Activated T-helper 1 cell treated with anti-CD3 and anti-CD28 coated beads, Interleukin-12 subunit alpha, Interleukin-12 subunit beta, Interleukin-2, Interleukin-4 antibody, amounts not matched to agents 30 ng/mL and 10 ng/mL and 1 ng/mL, durations not matched to agents 14 hours and 24 hours and 36 hours (primary cell): ENCODE measurements at regions of chr6 and their contacts with region 1.

Region 1: GRCh38 chr6:121430514-121431460 is 4.7 kb upstream of the GJA1 start:
- DNase-seq: no peak
- H3K4me3 Mint-ChIP-seq: no peak overlapping the region
- H3K27ac Mint-ChIP-seq: no peak overlapping the region
- H3K4me1 Mint-ChIP-seq: no peaks in the 10 kb centered on the region
- H3K27me3 Mint-ChIP-seq: peaks cover 7% of the 10 kb centered on the region

Region 2: DNA sequence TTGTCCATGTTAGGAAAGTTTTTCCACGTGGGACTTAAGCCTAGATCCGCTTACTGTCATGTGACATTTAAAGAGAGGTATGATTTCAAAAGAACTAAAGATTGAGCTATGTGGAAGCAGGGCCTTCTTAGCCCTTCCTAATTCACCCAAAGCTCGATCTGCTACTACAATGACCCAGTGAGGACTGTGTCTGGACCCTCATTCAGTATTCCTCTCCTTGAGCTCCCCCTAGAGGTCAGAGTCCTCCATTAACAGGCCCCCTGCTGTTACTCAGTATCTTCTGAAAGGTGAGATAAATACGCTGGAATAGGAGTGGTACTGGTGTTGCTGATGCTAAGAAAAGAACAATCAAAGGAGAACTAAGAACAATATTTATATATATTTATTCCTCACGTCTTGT is 418.7 kb after region 1 on chr6:
- intact Hi-C with region 1: loop called (anchors 2 kb)
- DNase-seq: no peak
- H3K4me3 Mint-ChIP-seq: no peak overlapping the region
- H3K27ac Mint-ChIP-seq: no peak overlapping the region
- H3K4me1 Mint-ChIP-seq: no peaks in the 10 kb centered on the region
- H3K27me3 Mint-ChIP-seq: peaks cover 2% of the 10 kb centered on the region

Region 3: DNA sequence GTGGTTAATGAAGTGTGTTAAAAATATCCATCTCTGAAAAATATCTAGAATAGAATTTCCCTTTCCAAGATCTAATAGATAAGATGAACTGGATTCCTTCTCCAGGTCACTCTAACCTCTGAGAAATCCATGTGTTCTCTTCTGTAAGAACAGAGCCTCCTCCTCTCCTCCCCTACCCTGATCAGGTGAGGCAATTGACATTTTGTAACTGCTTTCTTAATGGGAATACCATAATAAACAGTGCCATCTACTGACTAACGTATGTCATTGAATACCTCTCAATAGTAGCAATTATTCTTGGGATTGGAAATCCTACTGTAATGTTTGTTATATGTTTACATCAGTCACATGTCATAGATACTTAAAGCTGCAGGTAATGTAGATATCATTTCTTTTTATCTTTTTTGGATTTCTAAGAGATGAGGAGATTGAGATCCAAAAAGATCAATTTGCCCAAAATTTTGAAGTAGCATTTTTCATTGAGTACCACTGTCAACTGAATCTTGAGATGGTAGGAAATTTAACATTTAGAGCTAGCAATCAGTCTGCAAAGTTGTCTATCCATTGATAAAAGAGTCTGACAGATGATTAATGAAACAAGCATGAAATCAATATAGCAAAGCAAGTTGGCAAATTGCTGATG is 602.9 kb after region 1 on chr6:
- intact Hi-C with region 1: loop called (anchors 2 kb)
- DNase-seq: no peak
- H3K4me3 Mint-ChIP-seq: no peak overlapping the region
- H3K27ac Mint-ChIP-seq: no peak overlapping the region
- H3K4me1 Mint-ChIP-seq: no peaks in the 10 kb centered on the region
- H3K27me3 Mint-ChIP-seq: peaks cover 3% of the 10 kb centered on the region